ENCODE measurements at regions of chr19 and their contacts with region 1.

Region 1: GRCh38 chr19:51546650-51547396 is 15.4 kb upstream of the SIGLEC6 start:
- DNase-seq: peak; percentile 91
- H3K4me3 ChIP-seq: no peak overlapping the region
- H3K27ac ChIP-seq: peak overlapping the region; percentile 89
- H3K4me1 ChIP-seq: peaks cover 28% of the 10 kb centered on the region
- H3K27me3 ChIP-seq: no peaks in the 10 kb centered on the region
- CTCF ChIP-seq: no peak
- POLR2A ChIP-seq: peak; percentile 88

Region 2: GRCh38 chr19:51422053-51422448 is 124.8 kb before region 1 on chr19:
- CTCF ChIA-PET with region 1: no interaction called
- POLR2A ChIA-PET with region 1: no interaction called
- dilution Hi-C with region 1: no loop called
- intact Hi-C with region 1: loop called (anchors 2 kb)
- DNase-seq: peak; percentile 67
- H3K4me3 ChIP-seq: no peak overlapping the region
- H3K27ac ChIP-seq: no peak overlapping the region
- H3K4me1 ChIP-seq: no peaks in the 10 kb centered on the region
- H3K27me3 ChIP-seq: no peaks in the 10 kb centered on the region
- CTCF ChIP-seq: peak; percentile 99
- POLR2A ChIP-seq: no peak

Region 3: GRCh38 chr19:51514866-51515481 is 31.8 kb before region 1 on chr19:
- CTCF ChIA-PET with region 1: interaction called, 5 read pairs
- POLR2A ChIA-PET with region 1: interaction called, 3 read pairs
- dilution Hi-C with region 1: no loop called
- intact Hi-C with region 1: loop called (anchors 1 kb)
- DNase-seq: peak; percentile 55
- H3K4me3 ChIP-seq: no peak overlapping the region
- H3K27ac ChIP-seq: no peak overlapping the region
- H3K4me1 ChIP-seq: no peaks in the 10 kb centered on the region
- H3K27me3 ChIP-seq: peaks cover 0 to 4% of the 10 kb centered on the region in 2 experiments
- CTCF ChIP-seq: peak; percentile 65 to 69
- POLR2A ChIP-seq: no peak

Region 4: DNA sequence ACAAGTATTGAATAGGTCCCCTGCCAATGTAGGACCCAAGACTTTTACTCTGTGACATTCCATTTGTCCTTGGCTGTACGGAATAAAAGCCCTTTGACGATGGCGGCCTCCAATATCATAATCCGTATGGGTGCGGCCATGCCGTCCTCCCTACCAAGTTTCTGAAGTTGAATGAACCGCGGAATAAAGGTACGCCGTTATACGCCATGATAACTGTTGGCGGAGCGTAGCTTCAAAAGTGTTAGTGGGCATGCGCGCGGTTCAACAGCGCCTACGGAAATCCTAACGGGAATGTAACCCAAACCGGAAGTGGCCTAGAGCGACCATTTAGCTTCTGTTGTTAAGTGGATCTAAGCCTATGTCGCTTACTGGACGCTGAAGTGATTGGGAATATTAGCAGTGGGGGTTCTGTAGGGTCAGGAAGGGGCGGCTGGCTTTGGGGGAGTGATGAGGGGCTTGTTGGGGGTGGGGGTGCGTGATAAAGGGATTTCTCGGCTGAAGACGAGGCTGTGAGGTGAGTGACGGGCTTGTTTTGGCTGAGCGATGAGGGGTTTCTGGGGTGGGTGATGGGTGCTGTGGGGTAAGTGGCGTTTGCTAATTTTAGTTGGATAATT is 24.2 kb after region 1 on chr19 and contains the start of gene ZNF175:
- CTCF ChIA-PET with region 1: interaction called, 15 read pairs
- POLR2A ChIA-PET with region 1: no interaction called
- dilution Hi-C with region 1: no loop called
- intact Hi-C with region 1: loop called (anchors 1 kb)
- DNase-seq: peak; percentile 100
- H3K4me3 ChIP-seq: peak within 1 kb of the TSS; percentile 49 to 85 (median 53)
- H3K27ac ChIP-seq: peak within 1 kb of the TSS; percentile 95
- H3K4me1 ChIP-seq: peaks cover 33% of the 10 kb centered on the region
- H3K27me3 ChIP-seq: peaks cover 6 to 25% of the 10 kb centered on the region in 2 experiments
- CTCF ChIP-seq: no peak
- POLR2A ChIP-seq: peak; percentile 58
- total RNA-seq, gene ZNF175: 16.5 and 21.4 TPM in 2 replicates

Region 5: GRCh38 chr19:51688672-51689571 is 142.1 kb after region 1 on chr19:
- CTCF ChIA-PET with region 1: no interaction called
- POLR2A ChIA-PET with region 1: no interaction called
- dilution Hi-C with region 1: no loop called
- intact Hi-C with region 1: loop called (anchors 1 kb)
- DNase-seq: peak; percentile 92
- H3K4me3 ChIP-seq: peak overlapping the region; percentile 73 to 94 (median 91)
- H3K27ac ChIP-seq: peak overlapping the region; percentile 59
- H3K4me1 ChIP-seq: peaks cover 24% of the 10 kb centered on the region
- H3K27me3 ChIP-seq: no peaks in the 10 kb centered on the region
- CTCF ChIP-seq: peak in 1 of 2 donors; percentile 3
- POLR2A ChIP-seq: no peak

Measured in endothelial cell of umbilical vein (primary cell).